ENCODE measurements at regions of chr5 and their contacts with region 1.

Region 1: DNA sequence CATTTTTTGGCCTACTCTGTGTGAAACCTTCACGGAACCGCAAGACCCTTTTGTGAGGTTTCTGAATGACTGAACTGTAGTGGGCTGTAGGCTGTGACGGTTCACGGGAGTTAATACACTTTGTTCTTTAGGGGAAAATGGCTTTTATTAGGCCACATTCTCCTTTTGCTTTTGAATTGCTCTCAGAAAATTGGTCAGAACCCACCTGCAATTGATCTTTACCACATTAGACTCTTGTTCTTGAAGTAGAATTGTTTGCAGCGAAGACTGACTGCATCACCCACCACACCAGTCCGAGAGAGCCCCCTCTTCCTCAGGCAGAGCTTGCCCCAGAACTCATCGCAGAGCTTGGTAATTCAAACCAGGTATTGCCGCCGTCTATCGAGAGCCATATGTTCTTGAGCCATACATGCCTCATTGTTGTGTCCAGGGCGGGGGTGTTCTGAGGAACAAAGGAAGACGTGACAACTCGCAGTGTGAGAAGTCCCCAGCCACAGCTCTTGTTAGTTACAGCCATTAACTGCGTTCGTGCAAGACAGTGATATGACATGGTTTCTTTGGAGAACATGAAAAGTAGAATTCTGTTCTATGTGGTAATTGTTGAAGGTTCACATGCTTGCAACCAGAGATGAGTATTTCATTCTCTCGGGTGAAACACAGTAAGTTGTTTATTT is 166.4 kb upstream of the OTULINL start:
- DNase-seq: peak; percentile 63
- ATAC-seq: peak; percentile 48
- H3K4me3 Mint-ChIP-seq: peak overlapping the region; percentile 44
- H3K27ac Mint-ChIP-seq: peak overlapping the region; percentile 92
- H3K4me1 Mint-ChIP-seq: peaks cover 53% of the 10 kb centered on the region
- H3K27me3 Mint-ChIP-seq: peaks cover 4% of the 10 kb centered on the region

Region 2: GRCh38 chr5:14436801-14437542 is 21.8 kb after region 1 on chr5:
- CTCF ChIA-PET with region 1: interaction called, 4 read pairs
- POLR2A ChIA-PET with region 1: interaction called, 3 read pairs
- intact Hi-C with region 1: loop called (anchors 1 kb)
- DNase-seq: no peak
- ATAC-seq: peak; percentile 72
- H3K4me3 Mint-ChIP-seq: no peak overlapping the region
- H3K27ac Mint-ChIP-seq: peak overlapping the region; percentile 82
- H3K4me1 Mint-ChIP-seq: peaks cover 29% of the 10 kb centered on the region
- H3K27me3 Mint-ChIP-seq: peaks cover 6% of the 10 kb centered on the region

Region 3: GRCh38 chr5:14479143-14479696 is 64.1 kb after region 1 on chr5:
- CTCF ChIA-PET with region 1: no interaction called
- POLR2A ChIA-PET with region 1: no interaction called
- intact Hi-C with region 1: loop called (anchors 1 to 2 kb)
- DNase-seq: no peak
- ATAC-seq: peak; percentile 74
- H3K4me3 Mint-ChIP-seq: no peak overlapping the region
- H3K27ac Mint-ChIP-seq: no peak overlapping the region
- H3K4me1 Mint-ChIP-seq: peaks cover 11% of the 10 kb centered on the region
- H3K27me3 Mint-ChIP-seq: no peaks in the 10 kb centered on the region

Region 4: GRCh38 chr5:14595189-14595588 is 180.0 kb after region 1 on chr5:
- CTCF ChIA-PET with region 1: no interaction called
- POLR2A ChIA-PET with region 1: no interaction called
- intact Hi-C with region 1: loop called (anchors 2 to 5 kb)
- DNase-seq: peak; percentile 52
- ATAC-seq: peak; percentile 71
- H3K4me3 Mint-ChIP-seq: peak overlapping the region; percentile 66
- H3K27ac Mint-ChIP-seq: peak overlapping the region; percentile 96
- H3K4me1 Mint-ChIP-seq: peaks cover 85% of the 10 kb centered on the region
- H3K27me3 Mint-ChIP-seq: no peaks in the 10 kb centered on the region

Region 5: GRCh38 chr5:14720236-14720971 is 305.2 kb after region 1 on chr5:
- CTCF ChIA-PET with region 1: no interaction called
- POLR2A ChIA-PET with region 1: no interaction called
- intact Hi-C with region 1: loop called in 1 of 2 experiments (anchors 5 kb)
- DNase-seq: peak; percentile 1
- ATAC-seq: no peak
- H3K4me3 Mint-ChIP-seq: no peak overlapping the region
- H3K27ac Mint-ChIP-seq: no peak overlapping the region
- H3K4me1 Mint-ChIP-seq: peaks cover 33% of the 10 kb centered on the region
- H3K27me3 Mint-ChIP-seq: no peaks in the 10 kb centered on the region

Region 6: DNA sequence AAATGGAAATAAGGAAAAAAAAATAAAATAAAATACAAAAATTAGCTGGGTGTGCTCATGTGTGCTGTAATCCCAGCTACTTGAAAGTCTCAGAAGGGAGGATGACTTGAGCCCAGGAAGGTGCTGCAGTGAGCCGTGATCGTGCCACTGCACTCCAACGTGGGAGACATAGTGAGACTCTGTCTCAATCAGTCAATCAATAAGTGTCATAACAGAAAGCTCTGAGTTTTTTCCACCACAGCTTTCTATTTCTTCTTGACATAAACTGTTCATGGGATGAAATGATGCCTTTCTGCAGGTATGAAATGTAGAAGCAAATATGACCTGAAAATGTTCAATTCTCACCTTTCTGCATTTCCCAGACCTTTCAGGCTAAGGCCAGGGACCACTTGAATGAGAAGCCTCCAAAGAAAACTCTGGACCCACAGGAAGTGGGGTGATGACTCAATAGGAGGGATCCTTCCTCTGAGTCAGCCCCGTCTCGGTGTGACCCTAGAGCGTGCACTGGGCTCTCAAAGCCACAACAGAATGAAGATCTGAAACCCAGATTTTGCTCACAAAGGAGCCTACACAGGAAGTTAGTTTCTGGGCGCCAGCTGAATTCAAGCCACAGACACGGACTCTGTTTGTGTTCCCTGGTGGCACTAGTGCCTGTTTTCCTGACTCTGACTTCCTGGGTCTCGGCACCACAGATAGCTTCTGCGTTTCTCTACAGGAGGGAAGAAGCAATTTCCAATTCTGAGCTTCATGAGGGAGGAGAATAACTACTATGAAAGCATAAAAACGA is 394.4 kb after region 1 on chr5:
- CTCF ChIA-PET with region 1: no interaction called
- POLR2A ChIA-PET with region 1: no interaction called
- intact Hi-C with region 1: loop called (anchors 2 to 10 kb)
- DNase-seq: peak; percentile 87
- ATAC-seq: peak; percentile 96
- H3K4me3 Mint-ChIP-seq: peak overlapping the region; percentile 55
- H3K27ac Mint-ChIP-seq: peak overlapping the region; percentile 71
- H3K4me1 Mint-ChIP-seq: peaks cover 51% of the 10 kb centered on the region
- H3K27me3 Mint-ChIP-seq: no peaks in the 10 kb centered on the region

Measured in activated CD4-positive, alpha-beta T cell treated with anti-CD3 and anti-CD28 coated beads for 36 hours (primary cell).